Heart right ventricle (tissue), 16 donors: ENCODE measurements at regions of chr12 and their contacts with region 1.

Region 1: DNA sequence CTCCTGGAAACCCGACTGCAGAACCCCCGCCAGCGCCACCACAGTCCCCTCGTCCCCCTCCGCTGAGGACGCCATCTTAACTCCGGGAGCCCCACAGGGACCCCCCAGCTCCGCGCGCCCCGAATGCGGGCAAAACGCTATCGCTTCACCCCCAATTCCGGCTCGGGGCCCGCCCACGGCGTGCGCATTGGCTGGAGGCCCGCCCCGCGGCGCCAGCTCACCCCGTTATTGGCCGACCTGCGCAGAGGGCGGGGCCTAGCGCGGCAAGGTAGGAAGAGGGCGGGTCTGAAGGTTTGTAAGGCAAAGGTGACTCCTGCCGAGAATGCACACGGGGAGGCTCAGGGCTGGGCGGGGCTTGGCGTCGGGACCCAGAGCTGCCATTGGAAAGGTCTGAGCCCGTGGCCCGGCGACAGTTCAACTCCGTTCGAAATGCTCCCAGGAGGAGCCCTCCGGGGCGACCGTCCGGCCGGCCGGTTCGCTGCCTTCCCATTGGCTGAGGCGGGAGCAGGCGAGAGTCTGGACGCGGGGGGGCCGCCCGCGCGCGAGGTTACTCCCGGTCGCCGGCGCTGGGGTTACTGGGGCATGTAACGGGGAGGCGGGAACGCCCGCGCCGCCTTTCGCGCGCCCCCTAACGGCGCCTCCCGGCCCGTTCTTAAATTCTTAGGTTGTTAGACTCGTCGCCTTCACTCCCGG is at the start of gene LPCAT3:
- DNase-seq: peak; percentile 97 to 99
- ATAC-seq: peak; percentile 95 to 98 (median 98)
- H3K4me3 ChIP-seq: peak within 1 kb of the TSS; percentile 63 to 93 (median 72)
- H3K27ac ChIP-seq: peak within 1 kb of the TSS; percentile 74 to 97 (median 90)
- H3K4me1 ChIP-seq: peaks cover 0 to 35% (median 21%) of the 10 kb centered on the region in 9 donors
- H3K27me3 ChIP-seq: no peaks in the 10 kb centered on the region
- CTCF ChIP-seq: peak; percentile 85 to 97 (median 90)
- total RNA-seq, gene LPCAT3: 19.9 to 65.8 (median 34.1) TPM

Region 2: GRCh38 chr12:7042842-7043241 is 24.3 kb after region 1 on chr12:
- intact Hi-C with region 1: loop called in 1 of 10 experiments (anchors 1 kb)
- DNase-seq: no peak
- ATAC-seq: peak in 4 of 8 donors; percentile 56 to 74 (median 60)
- H3K4me3 ChIP-seq: no peak overlapping the region
- H3K27ac ChIP-seq: no peak overlapping the region
- H3K4me1 ChIP-seq: peaks cover 0 to 11% (median 0%) of the 10 kb centered on the region in 9 donors
- H3K27me3 ChIP-seq: no peaks in the 10 kb centered on the region
- CTCF ChIP-seq: peak in 8 of 9 donors; percentile 18 to 55 (median 46)